ENCODE measurements at regions of chr9 and their contacts with region 1.

Region 1: GRCh38 chr9:8600914-8601680 is 801.5 kb upstream of the DMAC1 start:
- DNase-seq: no peak
- H3K4me3 Mint-ChIP-seq: no peak overlapping the region
- H3K27ac Mint-ChIP-seq: no peak overlapping the region
- H3K4me1 Mint-ChIP-seq: no peaks in the 10 kb centered on the region
- H3K27me3 Mint-ChIP-seq: no peaks in the 10 kb centered on the region

Region 2: DNA sequence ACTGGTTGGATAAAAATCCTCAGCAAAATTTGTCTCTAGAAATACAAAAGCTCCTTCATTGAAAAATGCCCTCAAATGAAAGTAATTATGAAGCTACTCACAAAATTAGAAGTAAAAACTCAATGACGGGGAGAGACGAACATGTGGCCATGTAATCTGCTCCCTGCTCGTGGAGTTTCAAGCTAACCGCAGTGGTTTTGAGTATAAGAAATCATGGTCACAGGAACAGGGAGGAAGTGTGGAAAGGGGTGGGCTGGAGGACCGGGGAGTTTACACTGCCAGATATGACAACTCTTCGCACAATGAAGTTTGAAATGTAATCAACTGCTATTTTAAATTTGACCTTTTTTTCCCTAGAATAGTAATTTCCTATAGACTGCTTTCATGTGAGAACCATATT is 36.1 kb before region 1 on chr9:
- CTCF ChIA-PET with region 1: no interaction called
- POLR2A ChIA-PET with region 1: no interaction called
- intact Hi-C with region 1: loop called (anchors 5 kb)
- DNase-seq: no peak
- H3K4me3 Mint-ChIP-seq: no peak overlapping the region
- H3K27ac Mint-ChIP-seq: no peak overlapping the region
- H3K4me1 Mint-ChIP-seq: no peaks in the 10 kb centered on the region
- H3K27me3 Mint-ChIP-seq: peaks cover 4% of the 10 kb centered on the region